Left ventricle myocardium inferior (tissue), 1 donor: ENCODE measurements at regions of chr12 and their contacts with region 1.

Region 1: DNA sequence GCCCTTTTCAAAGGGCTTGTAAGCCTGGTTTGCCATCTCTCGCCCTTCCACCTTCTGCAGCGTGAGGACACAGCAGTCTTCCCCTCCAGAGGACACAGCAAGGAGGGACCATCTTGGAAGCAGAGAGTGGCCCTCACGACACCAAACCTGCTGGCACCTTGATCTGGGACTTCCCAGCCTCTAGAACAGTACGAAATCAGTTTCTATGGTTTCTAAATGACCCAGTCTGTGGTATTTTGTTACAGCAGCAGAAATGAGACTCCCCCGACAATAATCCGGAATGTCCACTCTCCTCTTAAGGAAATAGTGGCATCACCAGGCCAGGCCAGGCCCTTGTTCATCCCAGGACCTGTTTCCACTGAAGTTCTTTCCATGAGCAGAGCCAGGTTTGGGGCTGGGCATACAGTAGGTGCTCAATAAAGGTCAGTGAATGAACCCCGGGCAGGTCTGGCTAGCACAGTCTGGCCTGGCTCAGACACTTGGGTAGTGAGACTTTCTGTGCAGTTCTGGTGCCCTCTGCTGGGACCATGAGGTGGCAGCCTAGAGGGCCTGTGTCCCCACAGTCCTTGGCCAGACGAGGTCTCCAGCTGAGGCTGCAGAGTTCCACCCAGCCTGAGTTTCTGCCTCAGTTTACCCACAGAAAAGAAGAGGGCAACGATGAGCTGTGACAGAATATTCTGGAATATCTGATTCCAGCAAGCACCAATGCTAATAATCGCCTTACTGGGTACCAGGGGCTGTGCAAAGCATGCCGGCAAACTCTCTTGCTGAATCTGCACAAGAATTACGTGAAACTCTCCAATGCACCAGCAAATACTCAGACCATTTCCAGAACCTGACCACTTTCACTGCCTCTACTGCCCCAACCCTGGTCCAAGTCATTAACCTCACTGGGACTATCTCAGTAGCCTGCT is 14.0 kb downstream of the ABCB9 start:
- DNase-seq: peak; percentile 72
- H3K4me3 ChIP-seq: no peak overlapping the region
- H3K27ac ChIP-seq: no peak overlapping the region
- H3K4me1 ChIP-seq: peaks cover 16% of the 10 kb centered on the region
- H3K27me3 ChIP-seq: no peaks in the 10 kb centered on the region
- CTCF ChIP-seq: peak; percentile 94

Region 2: DNA sequence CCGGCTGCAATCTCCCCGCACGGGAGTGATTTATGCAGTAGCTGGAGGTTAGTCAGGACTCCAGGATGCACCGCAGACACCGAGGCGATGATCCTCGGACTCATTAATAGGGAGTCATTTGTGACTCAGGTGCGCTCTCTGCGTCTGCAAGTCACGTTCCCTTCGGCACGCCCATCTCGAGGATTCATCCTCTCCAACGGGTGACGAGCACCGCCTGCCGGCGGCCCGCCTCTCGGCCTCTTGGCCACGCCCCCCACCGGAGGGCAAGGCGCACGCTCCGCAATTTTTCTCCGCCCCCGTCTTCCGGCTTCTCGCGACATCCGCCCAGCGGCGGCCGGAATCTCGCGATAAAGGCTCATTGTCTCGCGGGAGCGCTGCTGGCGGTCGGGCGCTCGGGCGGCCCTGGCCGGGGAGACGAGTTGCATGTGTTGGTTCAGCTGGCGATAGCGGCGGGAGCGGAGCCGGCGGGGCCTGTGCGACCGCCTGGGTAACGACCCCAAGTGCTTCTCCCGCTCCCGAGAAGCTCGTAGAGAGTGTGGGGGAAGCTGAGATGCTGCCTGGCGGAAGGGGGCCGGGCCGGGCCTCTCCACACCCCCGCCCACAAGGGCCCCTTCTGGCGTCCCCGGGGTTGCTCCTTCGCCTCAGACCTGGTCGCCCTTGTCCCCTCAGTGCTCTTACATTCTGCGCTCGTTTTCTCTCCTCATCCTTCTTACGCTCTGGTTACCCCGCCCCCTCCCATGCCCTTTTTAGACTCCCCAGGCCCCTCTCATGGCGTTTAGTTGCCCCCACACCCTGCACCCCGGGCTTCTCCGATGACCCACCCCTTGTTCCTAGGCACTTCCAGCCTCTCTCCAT is 199.5 kb before region 1 on chr12 and contains the start of gene DENR:
- intact Hi-C with region 1: no loop called
- DNase-seq: peak; percentile 97
- H3K4me3 ChIP-seq: peak within 1 kb of the TSS; percentile 96
- H3K27ac ChIP-seq: peak within 1 kb of the TSS; percentile 90
- H3K4me1 ChIP-seq: peaks cover 21% of the 10 kb centered on the region
- H3K27me3 ChIP-seq: no peaks in the 10 kb centered on the region
- CTCF ChIP-seq: peak; percentile 80
- total RNA-seq, gene DENR: 23.5 TPM

Region 3: GRCh38 chr12:122793685-122794106 is 158.5 kb before region 1 on chr12:
- intact Hi-C with region 1: loop called (anchors 10 kb)
- DNase-seq: no peak
- H3K4me3 ChIP-seq: no peak overlapping the region
- H3K27ac ChIP-seq: no peak overlapping the region
- H3K4me1 ChIP-seq: peaks cover 4% of the 10 kb centered on the region
- H3K27me3 ChIP-seq: no peaks in the 10 kb centered on the region
- CTCF ChIP-seq: peak; percentile 76

Region 4: DNA sequence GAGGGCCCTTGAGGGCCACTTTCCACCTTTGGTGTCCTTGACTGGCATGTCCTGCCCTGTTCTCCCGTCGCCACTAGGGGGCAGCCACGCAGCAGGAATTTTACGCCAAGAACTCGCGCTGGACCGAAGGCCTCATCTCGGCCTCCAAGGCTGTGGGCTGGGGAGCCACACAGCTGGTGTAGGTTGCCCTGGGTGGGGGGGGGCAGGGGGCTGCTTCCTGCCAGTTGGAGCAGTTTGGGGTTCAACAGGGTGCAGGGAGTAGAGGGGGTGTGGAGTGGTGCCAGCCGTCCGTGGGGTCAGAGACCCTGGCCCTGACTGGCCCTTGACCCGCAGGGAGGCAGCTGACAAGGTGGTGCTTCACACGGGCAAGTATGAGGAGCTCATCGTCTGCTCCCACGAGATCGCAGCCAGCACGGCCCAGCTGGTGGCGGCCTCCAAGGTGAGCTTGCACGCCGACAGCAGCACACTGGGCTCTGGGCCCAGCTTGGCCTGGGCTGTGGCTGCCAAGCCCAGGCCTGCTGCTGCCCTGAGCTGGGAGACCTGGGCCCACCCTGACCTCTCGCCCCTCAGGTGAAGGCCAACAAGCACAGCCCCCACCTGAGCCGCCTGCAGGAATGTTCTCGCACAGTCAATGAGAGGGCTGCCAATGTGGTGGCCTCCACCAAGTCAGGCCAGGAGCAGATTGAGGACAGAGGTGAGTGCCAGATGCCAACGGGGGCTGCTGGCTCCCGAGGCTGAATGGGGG is 91.7 kb before region 1 on chr12:
- intact Hi-C with region 1: loop called (anchors 5 kb)
- DNase-seq: peak; percentile 85
- H3K4me3 ChIP-seq: no peak overlapping the region
- H3K27ac ChIP-seq: peak overlapping the region; percentile 76
- H3K4me1 ChIP-seq: peaks cover 53% of the 10 kb centered on the region
- H3K27me3 ChIP-seq: no peaks in the 10 kb centered on the region
- CTCF ChIP-seq: peak; percentile 91